ENCODE measurements at regions of chr3 and their contacts with region 1.

Region 1: GRCh38 chr3:114079761-114080160 is 23.2 kb downstream of the QTRT2 start:
- DNase-seq: no peak
- ATAC-seq: no peak
- H3K4me3 ChIP-seq: no peak overlapping the region
- H3K27ac ChIP-seq: peak overlapping the region in 1 of 2 donors; percentile 40
- H3K4me1 ChIP-seq: peaks cover 2 to 13% of the 10 kb centered on the region in 2 donors
- H3K27me3 ChIP-seq: no peaks in the 10 kb centered on the region

Region 2: GRCh38 chr3:114144909-114145647 is 65.3 kb after region 1 on chr3:
- intact Hi-C with region 1: loop called in 1 of 2 experiments (anchors 5 kb)
- DNase-seq: peak in 1 of 2 donors; percentile 71
- ATAC-seq: peak; percentile 84
- H3K4me3 ChIP-seq: no peak overlapping the region
- H3K27ac ChIP-seq: no peak overlapping the region
- H3K4me1 ChIP-seq: peaks cover 3% of the 10 kb centered on the region in 2 donors
- H3K27me3 ChIP-seq: no peaks in the 10 kb centered on the region